Psoas muscle (tissue), 8 donors: ENCODE measurements at regions of chr1 and their contacts with region 1.

Region 1: GRCh38 chr1:6401673-6402072 is 8.1 kb upstream of the ACOT7 start:
- DNase-seq: no peak
- ATAC-seq: no peak
- H3K4me3 ChIP-seq: no peak overlapping the region
- H3K27ac ChIP-seq: no peak overlapping the region
- H3K4me1 ChIP-seq: no peaks in the 10 kb centered on the region
- H3K27me3 ChIP-seq: peaks cover 0 to 1% (median 0%) of the 10 kb centered on the region in 3 donors
- CTCF ChIP-seq: no peak

Region 2: DNA sequence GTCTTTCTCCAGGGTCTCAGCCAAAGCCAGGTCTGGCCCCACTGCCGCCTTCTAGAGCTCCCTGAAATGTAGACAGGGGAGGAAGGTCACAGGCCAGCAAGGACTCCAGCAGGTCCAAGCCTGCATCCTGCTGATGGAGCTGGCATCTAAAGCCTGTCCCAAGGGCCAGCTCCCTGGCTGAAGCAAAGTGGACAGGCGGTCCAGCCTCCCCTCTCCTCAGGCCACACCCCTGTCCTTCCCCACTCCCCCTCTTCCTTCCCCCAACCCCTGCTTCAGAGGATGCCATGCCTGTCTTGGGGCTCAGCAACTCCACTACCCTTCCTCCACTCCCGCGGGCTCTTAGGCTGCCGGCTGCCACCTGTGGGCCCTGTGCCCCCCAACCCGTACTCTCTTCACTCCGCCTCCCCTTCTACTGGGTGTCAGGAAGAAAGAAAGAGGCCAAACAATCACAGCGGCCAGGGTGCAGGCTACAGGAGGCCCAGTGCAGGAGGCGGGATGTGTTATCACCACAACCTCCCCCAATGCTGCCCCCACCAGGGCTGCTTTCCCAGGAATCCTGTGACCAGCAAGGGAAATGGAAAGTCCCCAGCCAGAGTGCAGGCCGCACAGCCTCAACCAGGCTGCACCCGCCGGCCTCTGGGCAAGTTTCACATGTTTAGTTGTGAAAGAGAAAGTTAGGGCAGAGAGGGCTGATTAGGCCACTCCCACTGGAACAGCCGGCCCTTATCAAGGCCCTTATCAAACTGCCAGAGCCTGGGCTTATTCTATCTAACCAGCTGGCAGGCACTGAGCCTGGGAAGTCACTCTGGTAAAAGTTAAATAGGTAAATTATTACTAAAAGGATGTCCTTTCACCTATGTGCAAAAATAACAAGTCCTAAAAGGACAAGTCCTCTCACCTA is 42.2 kb before region 1 on chr1:
- intact Hi-C with region 1: loop called (anchors 2 kb)
- DNase-seq: peak in 1 of 2 donors; percentile 48
- ATAC-seq: peak in 2 of 4 donors; percentile 20 to 46
- H3K4me3 ChIP-seq: no peak overlapping the region
- H3K27ac ChIP-seq: peak overlapping the region; percentile 46
- H3K4me1 ChIP-seq: no peaks in the 10 kb centered on the region
- H3K27me3 ChIP-seq: no peaks in the 10 kb centered on the region
- CTCF ChIP-seq: no peak